IMR-90 (cell line): ENCODE measurements at regions of chr16 and their contacts with region 1.

Region 1: DNA sequence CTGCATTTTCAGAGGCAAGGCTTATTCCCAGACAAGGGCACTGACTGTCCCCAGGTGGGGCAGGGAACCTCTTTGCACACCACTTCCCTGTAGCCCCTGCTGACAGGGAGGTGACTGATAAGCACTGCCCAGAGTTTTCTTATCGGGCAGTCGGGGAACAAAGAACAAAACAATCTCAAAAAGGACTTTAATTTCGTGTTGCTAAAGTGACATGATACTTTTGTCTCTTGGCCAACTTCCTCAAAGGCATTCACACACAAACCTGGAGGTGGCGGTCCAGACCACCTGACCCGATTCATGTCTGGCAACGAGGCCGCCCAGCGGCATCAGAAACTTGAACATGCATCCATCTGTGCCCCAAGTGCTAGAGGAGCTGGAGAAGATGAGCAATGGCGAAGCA is 28.9 kb downstream of the ZDHHC7 start:
- DNase-seq: no peak
- ATAC-seq: no peak
- H3K4me3 ChIP-seq: no peak overlapping the region
- H3K27ac ChIP-seq: no peak overlapping the region
- H3K4me1 ChIP-seq: peaks cover 33% of the 10 kb centered on the region
- H3K27me3 ChIP-seq: no peaks in the 10 kb centered on the region
- CTCF ChIP-seq: no peak
- POLR2A ChIP-seq: no peak
- RAD21 ChIP-seq: no peak

Region 2: GRCh38 chr16:84993926-84994325 is 11.5 kb after region 1 on chr16:
- CTCF ChIA-PET with region 1: no interaction called
- POLR2A ChIA-PET with region 1: interaction called, 14 read pairs
- dilution Hi-C with region 1: no loop called
- in situ Hi-C with region 1: no loop called
- intact Hi-C with region 1: no loop called
- DNase-seq: no peak
- ATAC-seq: no peak
- H3K4me3 ChIP-seq: no peak overlapping the region
- H3K27ac ChIP-seq: peak overlapping the region; percentile 98
- H3K4me1 ChIP-seq: peaks cover 38% of the 10 kb centered on the region
- H3K27me3 ChIP-seq: no peaks in the 10 kb centered on the region
- CTCF ChIP-seq: no peak
- POLR2A ChIP-seq: no peak
- RAD21 ChIP-seq: no peak